Right ventricle myocardium inferior (tissue), 1 donor: ENCODE measurements at regions of chr20 and their contacts with region 1.

Region 1: DNA sequence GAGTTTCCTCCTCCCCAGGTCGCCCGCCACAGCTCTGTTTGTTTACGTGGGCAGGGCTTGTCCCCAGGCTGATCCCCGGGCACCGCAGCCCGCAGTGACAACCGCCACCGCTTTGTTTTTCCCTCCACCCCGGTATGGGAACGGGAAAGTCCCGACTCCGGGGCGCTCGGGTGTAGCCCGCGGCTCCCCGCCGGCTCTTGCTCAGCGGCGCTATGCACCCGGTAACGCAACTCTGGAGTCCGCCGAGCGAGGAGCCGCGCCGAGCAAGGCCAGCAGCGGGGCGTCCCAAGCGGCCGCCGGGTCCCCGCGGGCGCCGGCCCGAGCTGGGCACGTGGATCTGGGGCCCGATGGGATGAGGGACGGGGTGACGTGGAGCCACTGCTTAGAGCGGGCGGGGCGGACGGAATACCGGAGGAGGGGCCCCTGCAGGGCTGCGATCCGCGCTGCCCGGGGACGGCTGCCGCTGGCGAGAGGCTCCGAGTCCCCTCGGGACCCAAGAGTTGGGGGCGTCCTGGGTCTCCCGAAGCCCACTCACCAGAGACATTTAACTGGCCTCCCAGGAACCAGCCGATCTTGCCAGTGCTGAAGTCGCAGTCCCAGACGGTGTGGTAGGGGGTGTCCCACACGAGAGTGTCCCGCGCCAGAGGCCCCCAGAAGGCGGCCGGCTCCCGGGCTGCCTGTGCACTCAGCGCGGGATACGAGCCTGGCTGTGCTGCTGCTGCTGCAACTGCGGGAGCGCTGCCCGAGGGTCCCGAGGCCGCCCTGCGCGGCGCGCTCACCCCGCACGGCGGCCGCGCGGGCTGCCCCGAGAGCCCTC is 497 bp downstream of the ACSS1 start:
- DNase-seq: peak; percentile 90
- ATAC-seq: peak; percentile 73

Region 2: DNA sequence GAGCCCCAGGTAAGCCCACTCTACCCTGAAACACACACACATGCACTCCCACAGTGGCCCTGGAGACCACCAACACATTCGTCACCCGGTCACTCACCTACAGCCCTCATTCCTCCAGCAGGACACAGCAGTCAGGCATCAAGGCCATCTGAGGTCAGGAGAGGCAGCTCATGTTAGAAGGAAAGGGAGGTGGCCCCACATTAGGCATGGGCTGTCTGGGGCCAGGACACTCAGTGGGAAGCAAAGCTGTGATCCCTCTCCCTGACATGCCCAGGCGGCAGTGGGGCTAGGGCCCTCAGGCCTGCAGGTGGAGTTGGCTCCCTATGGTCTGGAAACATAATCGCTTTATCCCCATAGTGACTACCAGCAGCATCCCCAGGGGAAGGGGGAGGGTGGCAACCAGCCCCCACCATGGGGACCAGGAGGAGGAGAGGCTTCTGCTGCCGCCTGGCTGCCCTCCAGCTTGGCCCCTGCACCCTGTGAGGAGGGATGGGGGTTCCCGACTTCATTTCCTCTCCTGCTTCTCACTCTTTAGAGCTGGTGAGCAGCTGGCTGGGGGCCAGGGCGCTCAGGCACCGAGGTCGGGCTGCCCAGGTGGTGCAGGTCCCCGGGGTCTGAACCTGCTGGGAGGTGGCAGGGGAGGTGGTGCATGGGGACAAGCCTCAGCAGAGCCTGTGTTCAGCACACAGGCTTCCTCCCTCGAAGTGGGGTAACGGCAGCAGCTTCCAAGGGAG is 185.0 kb before region 1 on chr20:
- intact Hi-C with region 1: no loop called
- DNase-seq: no peak
- ATAC-seq: no peak

Region 3: GRCh38 chr20:25032478-25033280 is 24.8 kb before region 1 on chr20:
- intact Hi-C with region 1: loop called (anchors 2 kb)
- DNase-seq: peak; percentile 81
- ATAC-seq: peak; percentile 85